Left cardiac atrium (tissue), 4 donors: ENCODE measurements at regions of chr2 and their contacts with region 1.

Region 1: DNA sequence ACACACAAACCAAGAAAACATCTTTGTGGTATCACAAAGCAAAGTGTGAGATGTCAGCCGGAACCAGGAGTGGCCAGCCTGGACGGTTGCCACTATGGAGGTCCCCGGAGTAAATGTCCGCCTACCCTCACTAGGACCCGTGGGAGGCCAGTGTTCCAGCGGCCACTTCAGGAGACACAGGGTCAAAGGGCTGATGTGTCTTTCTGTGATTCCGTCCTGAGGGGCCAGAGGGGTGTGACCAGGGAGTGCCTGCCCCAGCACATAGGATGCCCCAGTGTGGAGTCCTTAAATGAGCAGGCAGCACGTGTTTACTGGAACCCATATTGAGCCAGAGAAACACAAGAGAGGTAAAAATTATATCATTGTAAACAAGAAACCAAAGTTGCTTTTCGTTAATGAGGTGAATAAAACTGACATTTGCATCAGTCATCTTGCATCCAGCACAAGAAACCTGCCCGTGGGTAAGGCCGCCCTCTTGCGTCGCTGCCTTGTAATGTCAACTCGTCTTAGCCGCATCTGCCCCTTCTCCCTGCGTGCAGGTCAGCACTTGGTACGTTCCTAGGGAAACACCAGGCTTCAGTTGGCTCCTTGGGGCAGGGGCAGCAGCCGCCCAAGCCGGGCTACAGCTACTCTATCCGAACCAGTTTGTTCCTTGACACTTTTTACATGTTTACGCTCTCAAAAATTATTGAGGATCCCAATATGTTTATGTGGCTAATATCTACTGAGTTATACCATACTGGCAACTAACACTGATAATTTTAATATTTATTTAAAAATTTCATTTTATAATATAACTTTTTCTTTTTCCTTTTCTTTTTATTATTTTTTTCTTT is 46.7 kb upstream of the LAPTM4A start:
- DNase-seq: peak; percentile 84
- ATAC-seq: peak; percentile 82 to 88

Region 2: DNA sequence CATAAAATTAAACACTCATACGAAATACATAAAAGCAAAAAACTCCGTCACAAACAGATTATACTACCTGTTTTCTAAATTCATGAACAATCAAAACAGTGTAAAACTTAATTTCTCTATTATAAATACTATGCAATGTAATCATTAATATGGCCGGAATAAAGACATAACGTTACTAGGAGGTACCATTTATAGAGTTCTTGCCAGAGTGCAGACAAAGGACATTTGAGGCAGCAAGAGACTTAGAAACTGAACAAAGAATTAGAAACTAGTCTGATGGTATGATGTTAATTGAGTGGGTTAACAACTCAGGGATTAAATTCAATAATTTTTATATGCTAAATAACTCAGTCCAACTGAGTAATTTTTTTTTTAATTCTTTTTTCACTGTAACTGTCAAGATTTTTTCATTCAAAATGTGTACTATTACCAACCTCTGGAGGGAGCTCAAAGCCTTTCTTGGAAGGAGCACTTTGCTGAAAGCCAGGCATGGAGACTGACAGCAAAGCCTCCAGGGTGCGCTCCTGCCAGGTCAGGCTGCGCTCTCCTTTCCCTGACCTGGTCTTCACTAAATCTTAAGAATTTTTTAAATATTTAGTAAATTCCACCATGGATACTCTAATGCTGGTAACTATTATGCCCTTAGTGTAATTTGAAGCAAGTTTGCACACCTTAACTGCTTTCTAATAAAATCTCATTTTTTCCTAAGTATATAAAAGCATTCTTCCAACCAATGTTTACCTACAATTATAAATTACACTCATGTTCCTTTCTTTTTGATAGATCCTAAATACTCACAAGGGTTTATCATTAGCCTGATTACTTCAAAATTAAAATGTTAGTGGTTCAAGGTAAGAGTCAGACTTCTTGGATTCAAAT is 142.3 kb before region 1 on chr2:
- intact Hi-C with region 1: loop called in 1 of 2 experiments (anchors 5 kb)
- DNase-seq: peak; percentile 40
- ATAC-seq: peak; percentile 82

Region 3: DNA sequence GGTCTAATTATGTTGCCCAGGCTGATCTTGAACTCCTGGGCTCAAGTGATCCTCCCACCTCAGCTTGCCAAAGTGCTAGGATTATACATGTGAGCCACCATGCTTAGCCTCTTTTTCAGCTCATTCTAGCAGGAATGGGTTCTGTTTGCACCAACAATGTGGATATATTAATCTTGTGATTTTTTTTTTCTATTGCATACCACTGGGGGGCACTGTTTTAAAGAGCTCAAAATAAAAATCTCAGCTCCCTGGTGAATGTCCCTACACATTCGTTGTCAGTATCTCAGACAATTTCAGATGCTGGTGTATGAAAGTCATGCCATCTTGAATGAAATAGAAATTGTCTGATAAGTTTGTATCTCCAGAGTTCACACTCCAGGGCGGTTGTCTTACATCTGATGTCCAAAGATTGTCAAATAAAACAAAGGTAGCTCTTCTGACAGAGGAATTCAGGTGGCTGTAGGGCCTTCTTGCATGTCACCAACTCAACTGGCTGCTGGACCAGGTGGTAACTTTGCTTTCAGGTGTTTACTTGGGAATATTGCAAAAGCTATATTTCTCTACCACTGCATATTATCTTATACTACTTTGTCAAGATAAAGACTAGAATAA is 82.5 kb before region 1 on chr2:
- intact Hi-C with region 1: loop called (anchors 1 to 5 kb)
- DNase-seq: no peak
- ATAC-seq: peak in 1 of 2 donors; percentile 28